ENCODE measurements at regions of chr18 and their contacts with region 1.

Region 1: DNA sequence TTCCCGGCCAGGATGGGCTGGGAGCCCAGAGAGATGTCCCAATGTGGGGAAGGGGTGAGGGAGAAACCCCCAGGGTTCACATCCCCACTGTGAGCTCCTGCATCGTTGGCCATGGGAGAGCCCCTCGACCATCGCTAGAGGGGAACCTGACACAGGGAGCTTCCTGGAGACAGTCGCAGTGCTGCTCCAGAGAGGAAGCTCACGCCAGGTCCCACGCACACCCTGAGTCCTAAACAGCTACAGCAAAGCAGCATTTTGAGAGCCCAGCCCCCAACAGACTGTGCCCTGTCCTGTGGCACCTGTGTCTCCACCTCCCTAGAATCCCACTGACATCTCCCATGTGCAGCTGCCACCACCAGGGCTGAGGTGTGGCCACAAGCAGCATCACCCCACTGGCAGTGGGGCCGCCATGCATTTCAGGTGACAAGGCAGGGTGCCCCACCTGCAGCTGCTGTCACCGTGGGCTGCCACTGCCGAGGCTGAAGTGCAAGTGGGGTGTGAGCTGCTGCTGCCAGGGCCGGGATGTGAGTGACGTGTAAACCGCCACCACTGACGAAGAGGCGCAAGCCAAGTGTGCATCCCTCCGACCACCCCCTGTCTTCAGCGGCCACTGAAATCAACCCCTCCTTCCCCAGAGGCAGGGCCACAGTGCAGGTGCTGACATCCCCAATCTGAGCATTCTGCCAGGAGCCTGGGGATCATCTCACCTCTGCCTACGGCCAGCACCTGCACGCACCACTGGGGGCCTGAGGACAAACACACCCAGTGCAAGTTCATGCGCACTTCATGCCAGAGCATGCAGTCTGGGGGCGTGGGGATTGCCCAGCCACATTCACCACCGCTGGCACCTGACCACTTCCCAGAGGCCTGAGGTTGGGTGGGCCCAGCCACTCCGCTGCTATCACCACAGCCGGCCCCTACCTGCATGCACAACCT is 467.7 kb upstream of the SALL3 start:
- DNase-seq: no peak
- ATAC-seq: no peak
- H3K4me3 ChIP-seq: no peak overlapping the region
- H3K27ac ChIP-seq: no peak overlapping the region
- H3K4me1 ChIP-seq: no peaks in the 10 kb centered on the region
- H3K27me3 ChIP-seq: no peaks in the 10 kb centered on the region
- CTCF ChIP-seq: no peak
- EP300 ChIP-seq: no peak
- POLR2A ChIP-seq: no peak
- RAD21 ChIP-seq: no peak

Region 2: DNA sequence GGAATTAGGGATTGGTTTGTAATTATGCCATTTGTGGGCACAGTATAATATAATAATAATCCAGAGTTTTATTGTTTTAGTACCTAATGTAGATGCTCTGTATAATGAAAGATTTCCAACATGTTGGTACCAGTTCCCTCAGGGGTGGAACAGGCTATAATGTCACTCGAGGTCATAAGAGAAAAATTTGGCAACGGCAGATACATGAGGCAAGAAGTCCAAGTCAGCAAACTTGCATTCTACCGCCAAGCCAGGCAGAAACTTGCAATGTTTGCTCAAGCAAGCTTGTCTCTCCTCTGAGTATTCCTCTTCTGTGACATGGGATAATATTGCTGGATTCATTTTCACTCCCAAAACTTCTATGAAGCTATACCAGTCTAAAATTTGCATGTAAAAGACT is 52.3 kb before region 1 on chr18:
- CTCF ChIA-PET with region 1: no interaction called
- POLR2A ChIA-PET with region 1: no interaction called
- RAD21 ChIA-PET with region 1: no interaction called
- SMC1A ChIA-PET with region 1: interaction called, 3 read pairs
- in situ Hi-C with region 1: no loop called
- intact Hi-C with region 1: loop called (anchors 10 kb)
- DNase-seq: no peak
- ATAC-seq: no peak
- H3K4me3 ChIP-seq: no peak overlapping the region
- H3K27ac ChIP-seq: no peak overlapping the region
- H3K4me1 ChIP-seq: no peaks in the 10 kb centered on the region
- H3K27me3 ChIP-seq: no peaks in the 10 kb centered on the region
- CTCF ChIP-seq: no peak
- EP300 ChIP-seq: no peak
- POLR2A ChIP-seq: no peak
- RAD21 ChIP-seq: no peak

Region 3: GRCh38 chr18:78813936-78814710 is 302.2 kb after region 1 on chr18:
- CTCF ChIA-PET with region 1: no interaction called
- POLR2A ChIA-PET with region 1: no interaction called
- RAD21 ChIA-PET with region 1: no interaction called
- SMC1A ChIA-PET with region 1: no interaction called
- in situ Hi-C with region 1: no loop called
- intact Hi-C with region 1: no loop called
- DNase-seq: no peak
- ATAC-seq: no peak
- H3K4me3 ChIP-seq: no peak overlapping the region
- H3K27ac ChIP-seq: no peak overlapping the region
- H3K4me1 ChIP-seq: no peaks in the 10 kb centered on the region
- H3K27me3 ChIP-seq: no peaks in the 10 kb centered on the region
- CTCF ChIP-seq: no peak
- EP300 ChIP-seq: no peak
- POLR2A ChIP-seq: no peak
- RAD21 ChIP-seq: no peak

Measured in GM12878 (cell line).